ENCODE measurements at regions of chr20 and their contacts with region 1.

Region 1: GRCh38 chr20:62511915-62512610 is 36.3 kb upstream of the GATA5 start:
- DNase-seq: peak; percentile 60 to 86
- ATAC-seq: peak; percentile 78 to 83 (median 82)
- H3K4me3 ChIP-seq: peak overlapping the region; percentile 45
- H3K27ac ChIP-seq: peak overlapping the region; percentile 95
- H3K4me1 ChIP-seq: peaks cover 40% of the 10 kb centered on the region
- H3K27me3 ChIP-seq: no peaks in the 10 kb centered on the region
- CTCF ChIP-seq: no peak

Region 2: GRCh38 chr20:62536871-62537401 is 24.9 kb after region 1 on chr20:
- intact Hi-C with region 1: loop called (anchors 2 kb)
- DNase-seq: peak; percentile 74 to 92
- ATAC-seq: peak; percentile 70 to 75 (median 74)
- H3K4me3 ChIP-seq: no peak overlapping the region
- H3K27ac ChIP-seq: peak overlapping the region; percentile 97
- H3K4me1 ChIP-seq: peaks cover 54% of the 10 kb centered on the region
- H3K27me3 ChIP-seq: no peaks in the 10 kb centered on the region
- CTCF ChIP-seq: no peak

Region 3: GRCh38 chr20:62557445-62557844 is 45.4 kb after region 1 on chr20:
- intact Hi-C with region 1: loop called (anchors 2 to 5 kb)
- DNase-seq: peak in 1 of 2 donors; percentile 48
- ATAC-seq: peak; percentile 5 to 18 (median 12)
- H3K4me3 ChIP-seq: peak overlapping the region; percentile 79
- H3K27ac ChIP-seq: peak overlapping the region; percentile 92
- H3K4me1 ChIP-seq: peaks cover 59% of the 10 kb centered on the region
- H3K27me3 ChIP-seq: no peaks in the 10 kb centered on the region
- CTCF ChIP-seq: no peak

Region 4: GRCh38 chr20:62603021-62603906 is 91.2 kb after region 1 on chr20:
- intact Hi-C with region 1: no loop called
- DNase-seq: peak; percentile 70 to 79
- ATAC-seq: peak; percentile 62 to 75 (median 68)
- H3K4me3 ChIP-seq: no peak overlapping the region
- H3K27ac ChIP-seq: peak overlapping the region; percentile 46
- H3K4me1 ChIP-seq: peaks cover 22% of the 10 kb centered on the region
- H3K27me3 ChIP-seq: peaks cover 0 to 57% (median 12%) of the 10 kb centered on the region in 3 donors
- CTCF ChIP-seq: no peak

Measured in psoas muscle (tissue), 8 donors.